ENCODE measurements at regions of chr5 and their contacts with region 1.

Region 1: DNA sequence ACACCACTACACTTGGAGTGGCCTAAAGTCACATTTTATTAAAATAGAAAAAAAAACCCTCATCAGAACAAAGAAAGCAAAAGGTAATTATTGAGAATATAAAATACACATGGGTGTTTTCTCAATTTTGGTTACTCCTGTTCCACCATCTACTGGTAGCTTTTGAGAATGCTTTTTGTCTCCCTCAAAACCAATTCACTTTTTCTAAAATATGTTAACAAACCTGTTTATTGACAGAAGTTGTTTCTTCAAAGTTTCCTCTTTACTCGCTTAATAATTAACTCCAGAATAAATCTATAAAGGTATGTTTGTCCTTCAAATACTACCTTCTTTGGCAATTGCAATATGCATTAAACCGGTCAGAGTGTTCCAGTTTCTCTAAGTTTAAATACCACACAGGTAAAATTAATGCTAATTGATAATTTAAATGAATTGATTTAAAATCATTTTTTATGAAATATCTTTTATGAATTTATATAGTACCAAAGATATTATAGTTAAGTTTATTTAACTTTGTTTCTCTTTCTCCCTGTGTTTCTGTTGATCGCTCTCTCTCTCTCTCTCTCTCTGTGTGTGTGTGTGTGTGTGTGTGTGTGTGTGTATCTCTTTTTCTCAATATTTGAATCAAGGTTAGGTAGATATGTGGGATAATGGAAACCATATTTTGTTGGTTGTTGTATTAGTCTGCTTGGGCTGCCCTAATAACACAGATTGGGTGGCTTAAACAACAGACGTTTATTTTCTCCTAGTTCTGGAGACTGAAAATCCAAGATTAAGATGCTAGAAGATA is 487.4 kb downstream of the PRDM9 start:
- DNase-seq: no peak
- H3K4me3 ChIP-seq: no peak overlapping the region
- H3K27ac ChIP-seq: no peak overlapping the region
- H3K4me1 ChIP-seq: no peaks in the 10 kb centered on the region
- H3K27me3 ChIP-seq: no peaks in the 10 kb centered on the region
- CTCF ChIP-seq: peak; percentile 42; the same call in 1 of the 2 replicates

Region 2: GRCh38 chr5:23963449-23963848 is 31.3 kb before region 1 on chr5:
- CTCF ChIA-PET with region 1: no interaction called
- POLR2A ChIA-PET with region 1: no interaction called
- intact Hi-C with region 1: loop called (anchors 2 kb)
- DNase-seq: no peak
- H3K4me3 ChIP-seq: no peak overlapping the region
- H3K27ac ChIP-seq: no peak overlapping the region
- H3K4me1 ChIP-seq: no peaks in the 10 kb centered on the region
- H3K27me3 ChIP-seq: no peaks in the 10 kb centered on the region
- CTCF ChIP-seq: no peak

Region 3: GRCh38 chr5:24059006-24059405 is 64.2 kb after region 1 on chr5:
- CTCF ChIA-PET with region 1: no interaction called
- POLR2A ChIA-PET with region 1: no interaction called
- intact Hi-C with region 1: no loop called
- DNase-seq: no peak
- H3K4me3 ChIP-seq: no peak overlapping the region
- H3K27ac ChIP-seq: no peak overlapping the region
- H3K4me1 ChIP-seq: no peaks in the 10 kb centered on the region
- H3K27me3 ChIP-seq: no peaks in the 10 kb centered on the region
- CTCF ChIP-seq: no peak

Measured in PC-9 (cell line).